ENCODE measurements at regions of chr9 and their contacts with region 1.

Region 1: GRCh38 chr9:78439190-78439865 is 142.4 kb downstream of the PSAT1 start:
- DNase-seq: peak; percentile 82
- H3K4me3 ChIP-seq: peak overlapping the region in 2 of 3 donors; percentile 19 to 51
- H3K27ac ChIP-seq: no peak overlapping the region
- H3K4me1 ChIP-seq: peaks cover 0 to 3% of the 10 kb centered on the region in 2 donors
- H3K27me3 ChIP-seq: no peaks in the 10 kb centered on the region
- CTCF ChIP-seq: peak; percentile 72 to 82 (median 77)
- POLR2A ChIP-seq: no peak

Region 2: DNA sequence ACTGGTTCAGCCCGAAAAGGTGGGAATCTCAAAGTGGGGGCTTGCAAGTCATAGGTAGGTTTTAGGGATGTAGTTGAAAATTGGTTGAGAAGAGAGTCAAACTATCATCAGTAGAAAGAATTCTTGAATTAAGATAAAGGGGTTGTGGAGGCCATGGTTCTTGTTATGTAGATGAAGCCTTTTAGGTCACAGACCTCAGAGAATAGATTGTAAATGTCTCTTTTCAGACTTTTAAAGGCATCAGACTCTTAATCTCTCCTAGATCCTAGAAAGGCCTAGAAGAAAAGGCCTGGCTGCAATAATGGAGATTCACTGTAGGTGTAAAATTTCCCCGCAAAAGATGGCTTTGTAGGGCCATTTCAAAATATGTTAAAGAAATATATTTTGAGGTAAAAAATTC is 46.0 kb before region 1 on chr9:
- intact Hi-C with region 1: loop called (anchors 2 kb)
- DNase-seq: no peak
- H3K4me3 ChIP-seq: no peak overlapping the region
- H3K27ac ChIP-seq: no peak overlapping the region
- H3K4me1 ChIP-seq: no peaks in the 10 kb centered on the region
- H3K27me3 ChIP-seq: no peaks in the 10 kb centered on the region
- CTCF ChIP-seq: no peak
- POLR2A ChIP-seq: no peak

Measured in breast epithelium (tissue), 4 donors.